ENCODE measurements at regions of chr1 and their contacts with region 1.

Region 1: GRCh38 chr1:155867766-155868165 is 8.4 kb downstream of the SYT11 start:
- DNase-seq: no peak
- H3K4me3 ChIP-seq: no peak overlapping the region
- H3K27ac ChIP-seq: no peak overlapping the region
- H3K4me1 ChIP-seq: no peaks in the 10 kb centered on the region
- H3K27me3 ChIP-seq: no peaks in the 10 kb centered on the region
- CTCF ChIP-seq: no peak
- EP300 ChIP-seq: no peak
- POLR2A ChIP-seq: no peak

Region 2: GRCh38 chr1:155681776-155682175 is 186.0 kb before region 1 on chr1:
- in situ Hi-C with region 1: no loop called
- intact Hi-C with region 1: no loop called
- DNase-seq: no peak
- H3K4me3 ChIP-seq: no peak overlapping the region
- H3K27ac ChIP-seq: no peak overlapping the region
- H3K4me1 ChIP-seq: peaks cover 10 to 24% (median 19%) of the 10 kb centered on the region in 4 donors
- H3K27me3 ChIP-seq: no peaks in the 10 kb centered on the region
- CTCF ChIP-seq: no peak
- EP300 ChIP-seq: no peak
- POLR2A ChIP-seq: no peak

Region 3: GRCh38 chr1:155897746-155898145 is 30.0 kb after region 1 on chr1:
- in situ Hi-C with region 1: no loop called
- intact Hi-C with region 1: loop called (anchors 1 kb)
- DNase-seq: no peak
- H3K4me3 ChIP-seq: no peak overlapping the region
- H3K27ac ChIP-seq: no peak overlapping the region
- H3K4me1 ChIP-seq: peaks cover 0 to 13% (median 8%) of the 10 kb centered on the region in 4 donors
- H3K27me3 ChIP-seq: no peaks in the 10 kb centered on the region
- CTCF ChIP-seq: no peak
- EP300 ChIP-seq: no peak
- POLR2A ChIP-seq: no peak